ENCODE measurements at regions of chr7 and their contacts with region 1.

Region 1: DNA sequence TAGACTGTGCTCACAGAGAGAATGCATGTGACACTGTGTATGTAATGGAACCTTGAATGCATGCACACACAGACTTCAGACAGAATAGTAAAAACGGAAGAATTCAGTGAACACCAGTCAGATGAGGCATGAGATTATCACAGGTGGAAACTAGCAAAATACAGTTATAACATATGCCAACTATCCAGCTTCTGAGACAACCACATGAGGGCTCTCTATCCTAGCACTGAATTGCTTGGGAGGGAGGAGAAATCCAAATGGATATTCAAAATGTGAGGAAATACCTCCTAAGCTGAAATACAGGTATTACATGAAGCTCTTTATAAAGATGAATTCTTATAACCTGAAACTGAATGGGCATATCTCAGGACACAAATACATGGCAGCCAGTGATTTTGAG is 30.6 kb downstream of the GARS1 start:
- DNase-seq: no peak
- H3K4me3 Mint-ChIP-seq: no peak overlapping the region
- H3K27ac Mint-ChIP-seq: peak overlapping the region; percentile 44
- H3K4me1 Mint-ChIP-seq: peaks cover 20% of the 10 kb centered on the region
- H3K27me3 Mint-ChIP-seq: no peaks in the 10 kb centered on the region

Region 2: GRCh38 chr7:30612658-30613265 is 12.5 kb before region 1 on chr7:
- intact Hi-C with region 1: loop called (anchors 2 kb)
- DNase-seq: no peak
- H3K4me3 Mint-ChIP-seq: peak overlapping the region; percentile 44
- H3K27ac Mint-ChIP-seq: peak overlapping the region; percentile 82
- H3K4me1 Mint-ChIP-seq: peaks cover 42% of the 10 kb centered on the region
- H3K27me3 Mint-ChIP-seq: no peaks in the 10 kb centered on the region

Measured in activated CD4-positive, alpha-beta T cell treated with anti-CD3 and anti-CD28 coated beads, Interleukin-2, amount 10 ng/mL, durations not matched to agents 24 days and 14 days (primary cell).